Activated naive CD4-positive, alpha-beta T cell treated with anti-CD3 and anti-CD28 coated beads for 36 hours (primary cell): ENCODE measurements at regions of chr14 and their contacts with region 1.

Region 1: GRCh38 chr14:76710056-76711010 is 50.9 kb upstream of the VASH1 start:
- DNase-seq: peak; percentile 53
- H3K4me3 Mint-ChIP-seq: no peak overlapping the region
- H3K27ac Mint-ChIP-seq: no peak overlapping the region
- H3K4me1 Mint-ChIP-seq: no peaks in the 10 kb centered on the region
- H3K27me3 Mint-ChIP-seq: peaks cover 3% of the 10 kb centered on the region

Region 2: GRCh38 chr14:76525106-76525821 is 185.1 kb before region 1 on chr14:
- CTCF ChIA-PET with region 1: no interaction called
- intact Hi-C with region 1: no loop called
- DNase-seq: no peak
- H3K4me3 Mint-ChIP-seq: no peak overlapping the region
- H3K27ac Mint-ChIP-seq: no peak overlapping the region
- H3K4me1 Mint-ChIP-seq: no peaks in the 10 kb centered on the region
- H3K27me3 Mint-ChIP-seq: peaks cover 6% of the 10 kb centered on the region

Region 3: GRCh38 chr14:76677534-76678145 is 32.7 kb before region 1 on chr14:
- CTCF ChIA-PET with region 1: no interaction called
- intact Hi-C with region 1: no loop called
- DNase-seq: no peak
- H3K4me3 Mint-ChIP-seq: no peak overlapping the region
- H3K27ac Mint-ChIP-seq: no peak overlapping the region
- H3K4me1 Mint-ChIP-seq: no peaks in the 10 kb centered on the region
- H3K27me3 Mint-ChIP-seq: peaks cover 10% of the 10 kb centered on the region

Region 4: DNA sequence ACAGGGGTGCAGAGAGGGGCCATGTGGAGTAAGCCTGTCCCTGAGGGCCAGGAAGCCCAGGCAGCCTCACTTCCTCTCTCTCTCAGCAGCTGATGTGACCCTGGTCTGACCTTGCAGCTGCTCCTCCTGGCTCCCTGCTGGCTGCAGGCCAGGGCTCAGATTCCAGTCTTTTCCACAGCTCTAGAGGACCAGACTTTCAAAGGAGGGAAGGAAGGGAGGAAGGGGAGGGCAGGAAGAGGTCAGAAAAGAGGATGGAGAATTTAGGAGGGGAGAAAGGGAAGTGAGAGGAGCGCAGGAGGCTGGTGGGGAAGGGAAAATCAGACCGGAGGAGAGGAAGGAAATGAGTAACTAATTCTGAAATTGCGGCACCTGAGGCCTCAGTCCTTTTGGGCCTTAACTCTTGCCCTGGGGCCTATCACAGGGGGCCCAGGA is 10.1 kb after region 1 on chr14:
- CTCF ChIA-PET with region 1: interaction called, 21 read pairs
- intact Hi-C with region 1: no loop called
- DNase-seq: no peak
- H3K4me3 Mint-ChIP-seq: no peak overlapping the region
- H3K27ac Mint-ChIP-seq: no peak overlapping the region
- H3K4me1 Mint-ChIP-seq: no peaks in the 10 kb centered on the region
- H3K27me3 Mint-ChIP-seq: peaks cover 19% of the 10 kb centered on the region

Region 5: DNA sequence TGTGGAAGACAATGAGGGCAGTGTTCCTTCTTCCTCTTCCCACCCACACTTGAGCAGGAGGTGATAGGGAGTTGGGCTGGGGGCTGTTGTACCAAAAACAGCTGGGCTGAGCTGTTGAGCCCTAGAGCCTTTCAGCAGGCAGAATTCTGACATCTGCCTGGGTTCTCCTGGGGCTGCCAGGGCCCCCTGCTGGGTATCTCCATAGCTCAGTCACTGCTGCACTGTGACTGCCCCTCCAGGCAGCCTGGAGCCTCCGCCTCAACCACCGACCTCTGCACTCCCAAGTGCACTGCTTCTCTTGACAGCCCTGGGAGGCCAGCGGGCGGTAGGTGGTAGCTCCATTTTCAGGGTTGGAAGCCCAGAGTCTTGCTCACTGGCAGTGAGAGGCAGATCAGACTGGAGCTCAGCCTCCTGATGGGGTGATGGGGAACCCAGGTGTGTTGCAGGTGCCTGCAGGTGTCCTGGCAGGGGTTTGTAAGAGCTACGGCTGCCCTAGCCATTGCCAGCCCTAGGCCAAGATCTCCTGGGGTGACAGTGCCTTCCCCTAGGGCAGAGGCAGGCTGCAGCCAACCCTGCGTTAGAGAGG is 66.4 kb after region 1 on chr14:
- CTCF ChIA-PET with region 1: interaction called, 76 read pairs
- intact Hi-C with region 1: no loop called
- DNase-seq: no peak
- H3K4me3 Mint-ChIP-seq: no peak overlapping the region
- H3K27ac Mint-ChIP-seq: no peak overlapping the region
- H3K4me1 Mint-ChIP-seq: peaks cover 6% of the 10 kb centered on the region
- H3K27me3 Mint-ChIP-seq: peaks cover 3% of the 10 kb centered on the region

Region 6: GRCh38 chr14:76812211-76813044 is 102.1 kb after region 1 on chr14 and contains the start of gene ANGEL1:
- CTCF ChIA-PET with region 1: interaction called, 20 read pairs
- intact Hi-C with region 1: loop called (anchors 1 kb)
- DNase-seq: peak; percentile 97
- H3K4me3 Mint-ChIP-seq: peak within 1 kb of the TSS; percentile 91
- H3K27ac Mint-ChIP-seq: peak within 1 kb of the TSS; percentile 81
- H3K4me1 Mint-ChIP-seq: peaks cover 24% of the 10 kb centered on the region
- H3K27me3 Mint-ChIP-seq: no peaks in the 10 kb centered on the region
- total RNA-seq, gene ANGEL1: 17.0 to 19.8 TPM

Region 7: DNA sequence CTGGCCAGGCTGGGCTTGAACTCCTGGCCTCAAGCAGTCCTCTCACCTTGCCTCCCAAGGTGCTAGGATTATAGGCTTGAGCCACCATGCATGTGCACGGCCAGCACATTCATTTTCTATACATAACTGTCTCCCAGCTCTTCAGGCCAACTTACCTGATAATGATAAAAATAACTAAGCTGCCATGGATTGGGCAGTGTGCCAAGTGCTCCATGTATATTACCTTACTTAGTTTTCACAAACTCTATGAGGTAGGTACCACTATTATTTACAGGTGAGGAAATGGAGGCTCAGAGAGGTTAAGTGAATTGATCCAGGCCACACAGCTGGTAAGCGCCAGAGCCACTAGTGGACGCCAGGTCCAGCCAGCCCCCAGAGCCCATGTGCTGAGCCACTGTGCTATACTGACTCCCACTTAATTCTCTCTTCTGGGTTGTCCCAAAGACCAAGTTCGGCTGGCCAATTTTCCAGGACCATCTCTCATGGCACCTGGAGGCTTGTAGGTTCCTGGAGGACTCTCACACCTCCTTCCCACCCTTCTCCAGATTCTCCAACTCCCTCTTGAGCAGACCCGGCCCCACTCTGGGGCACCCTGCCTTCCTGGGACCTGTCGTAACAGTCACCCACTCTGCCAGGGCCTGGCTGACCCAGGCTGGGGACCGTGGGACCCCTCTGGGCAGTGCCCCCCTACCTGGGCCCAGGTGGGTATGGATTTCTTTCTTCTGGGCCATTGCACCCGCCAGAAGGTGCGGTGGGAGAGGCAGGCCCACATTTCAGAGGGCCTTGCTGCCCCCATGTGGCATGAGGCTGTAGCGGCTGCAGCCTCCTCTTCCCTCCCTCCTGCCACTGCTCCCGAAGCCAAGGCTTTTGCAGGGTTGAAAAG is 357.5 kb after region 1 on chr14:
- CTCF ChIA-PET with region 1: interaction called, 8 read pairs
- intact Hi-C with region 1: loop called (anchors 1 kb)
- DNase-seq: peak; percentile 71
- H3K4me3 Mint-ChIP-seq: no peak overlapping the region
- H3K27ac Mint-ChIP-seq: no peak overlapping the region
- H3K4me1 Mint-ChIP-seq: no peaks in the 10 kb centered on the region
- H3K27me3 Mint-ChIP-seq: peaks cover 2% of the 10 kb centered on the region